Panc1 (cell line): ENCODE measurements at regions of chr6 and their contacts with region 1.

Region 1: GRCh38 chr6:68364271-68364805 is 270.7 kb upstream of the ADGRB3 start:
- DNase-seq: no peak
- ATAC-seq: no peak
- H3K4me3 ChIP-seq: no peak overlapping the region
- H3K27ac ChIP-seq: no peak overlapping the region
- H3K4me1 ChIP-seq: no peaks in the 10 kb centered on the region
- H3K27me3 ChIP-seq: no peaks in the 10 kb centered on the region
- CTCF ChIP-seq: no peak

Region 2: GRCh38 chr6:68343901-68344300 is 20.4 kb before region 1 on chr6:
- CTCF ChIA-PET with region 1: interaction called, 10 read pairs
- POLR2A ChIA-PET with region 1: no interaction called
- in situ Hi-C with region 1: no loop called
- intact Hi-C with region 1: no loop called
- DNase-seq: peak; percentile 22
- ATAC-seq: peak; percentile 81
- H3K4me3 ChIP-seq: no peak overlapping the region
- H3K27ac ChIP-seq: no peak overlapping the region
- H3K4me1 ChIP-seq: no peaks in the 10 kb centered on the region
- H3K27me3 ChIP-seq: no peaks in the 10 kb centered on the region
- CTCF ChIP-seq: peak; percentile 73